Activated CD4-positive, alpha-beta T cell treated with anti-CD3 and anti-CD28 coated beads for 36 hours (primary cell): ENCODE measurements at regions of chr2 and their contacts with region 1.

Region 1: DNA sequence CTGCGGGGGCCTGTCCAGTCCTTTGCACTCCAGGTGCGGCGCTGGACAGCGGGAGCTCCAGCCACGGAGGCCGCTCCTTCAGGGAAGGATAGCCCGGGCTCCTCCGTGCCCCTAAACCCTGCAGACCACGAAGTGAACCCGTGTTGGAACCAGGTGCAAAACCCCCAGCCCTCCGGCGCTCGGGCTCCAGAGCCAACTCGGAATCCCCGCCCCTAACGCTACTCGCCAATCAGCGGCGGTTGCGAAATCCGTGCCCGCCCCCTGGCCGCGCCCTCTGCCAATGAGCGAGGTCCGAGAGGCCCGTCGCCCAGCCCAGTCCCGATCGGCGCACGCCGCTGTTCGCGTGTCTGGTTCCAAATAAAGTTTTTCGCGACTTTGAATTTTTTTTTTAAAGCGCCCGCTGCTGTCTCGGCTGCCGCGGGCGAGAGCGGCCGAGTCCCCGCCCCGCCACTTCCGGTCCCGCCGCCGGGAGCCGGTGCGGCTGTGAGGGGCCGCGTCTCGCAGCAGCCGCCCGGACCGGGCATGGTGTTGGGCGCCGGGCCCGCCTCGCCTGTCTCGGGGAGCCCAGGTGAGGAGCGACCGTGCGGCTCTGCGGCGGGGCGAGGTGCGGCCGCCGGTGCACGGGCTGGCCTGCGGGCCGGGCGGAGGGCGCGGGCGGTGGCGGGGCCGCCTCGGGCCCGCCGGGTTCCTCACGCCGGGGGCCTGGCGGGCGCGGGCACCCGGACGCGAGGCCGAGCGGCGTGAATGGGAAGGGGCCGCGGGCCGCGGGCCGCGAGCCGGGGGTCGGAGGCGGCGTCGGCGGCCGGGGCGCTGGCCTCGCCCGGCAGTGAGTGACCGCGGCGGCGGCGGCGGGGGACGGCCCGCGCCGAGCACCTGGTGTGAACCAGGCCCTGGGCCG is at the start of gene UBE2F:
- DNase-seq: peak; percentile 98
- ATAC-seq: peak; percentile 95
- H3K4me3 Mint-ChIP-seq: peak within 1 kb of the TSS; percentile 78
- H3K27ac Mint-ChIP-seq: peak within 1 kb of the TSS; percentile 88
- H3K4me1 Mint-ChIP-seq: peaks cover 38% of the 10 kb centered on the region
- H3K27me3 Mint-ChIP-seq: no peaks in the 10 kb centered on the region
- total RNA-seq, gene UBE2F: 59.2 to 75.5 TPM

Region 2: DNA sequence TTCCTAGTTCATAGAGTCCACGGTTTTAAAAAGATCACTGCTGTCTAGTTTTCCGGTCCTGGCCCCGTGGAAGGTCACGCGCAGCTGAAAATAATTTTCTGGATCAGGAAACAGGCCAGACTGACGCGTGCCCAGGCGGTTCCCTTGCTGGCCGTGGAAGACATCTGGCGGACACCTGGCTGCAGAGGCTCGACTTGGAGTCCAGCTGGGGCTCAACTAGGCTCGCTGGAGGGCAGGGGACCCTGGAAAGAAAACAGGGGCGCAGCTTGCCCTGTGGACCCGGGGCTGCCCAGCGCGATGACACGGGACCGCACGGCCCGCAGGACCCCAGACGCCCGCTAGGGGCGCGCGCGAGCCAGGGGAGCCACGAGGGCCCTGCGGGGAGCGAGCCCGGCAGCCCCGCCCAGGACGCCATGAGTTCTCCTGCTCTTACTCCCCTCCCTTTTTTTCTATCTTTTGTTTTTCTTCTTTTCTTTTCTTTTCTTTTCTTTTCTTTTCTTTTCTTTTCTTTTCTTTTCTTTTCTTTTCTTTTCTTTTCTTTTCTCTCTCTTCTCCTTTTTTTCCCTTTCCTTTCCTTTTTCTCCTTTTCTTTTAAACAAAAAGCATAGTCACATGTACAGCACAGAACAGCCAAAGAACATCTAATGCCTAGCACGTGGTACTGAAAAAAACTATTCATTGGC is 43.2 kb before region 1 on chr2:
- CTCF ChIA-PET with region 1: interaction called, 4 read pairs
- POLR2A ChIA-PET with region 1: no interaction called
- intact Hi-C with region 1: loop called in 1 of 2 experiments (anchors 2 kb)
- DNase-seq: peak; percentile 89
- ATAC-seq: peak; percentile 98
- H3K4me3 Mint-ChIP-seq: no peak overlapping the region
- H3K27ac Mint-ChIP-seq: no peak overlapping the region
- H3K4me1 Mint-ChIP-seq: peaks cover 20% of the 10 kb centered on the region
- H3K27me3 Mint-ChIP-seq: no peaks in the 10 kb centered on the region

Region 3: DNA sequence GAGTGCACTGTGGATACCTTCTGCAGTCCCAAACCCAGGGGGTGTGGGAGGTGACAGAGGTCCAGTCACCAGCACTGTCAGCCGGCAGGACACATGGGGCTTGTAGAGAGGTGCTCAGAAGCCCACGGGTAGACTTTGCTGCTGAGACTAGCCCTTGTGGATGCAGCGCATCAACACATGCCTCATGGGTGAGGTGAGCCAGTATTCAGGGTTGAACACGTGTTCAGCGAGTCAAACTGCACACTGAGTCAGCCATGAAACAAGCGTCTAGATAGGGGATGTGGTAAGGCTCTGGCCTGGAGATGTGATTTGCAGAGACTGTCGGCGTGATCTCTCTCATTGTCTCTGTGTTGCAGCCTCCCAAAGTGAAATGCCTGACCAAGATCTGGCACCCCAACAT is 58.2 kb after region 1 on chr2:
- CTCF ChIA-PET with region 1: no interaction called
- POLR2A ChIA-PET with region 1: no interaction called
- intact Hi-C with region 1: loop called in 1 of 2 experiments (anchors 2 kb)
- DNase-seq: peak; percentile 77
- ATAC-seq: peak; percentile 100
- H3K4me3 Mint-ChIP-seq: peak overlapping the region; percentile 32
- H3K27ac Mint-ChIP-seq: peak overlapping the region; percentile 84
- H3K4me1 Mint-ChIP-seq: peaks cover 20% of the 10 kb centered on the region
- H3K27me3 Mint-ChIP-seq: no peaks in the 10 kb centered on the region

Region 4: GRCh38 chr2:238231251-238231793 is 264.5 kb after region 1 on chr2:
- CTCF ChIA-PET with region 1: no interaction called
- POLR2A ChIA-PET with region 1: no interaction called
- intact Hi-C with region 1: loop called in 1 of 2 experiments (anchors 1 kb)
- DNase-seq: peak; percentile 89
- ATAC-seq: peak; percentile 90
- H3K4me3 Mint-ChIP-seq: peak overlapping the region; percentile 74
- H3K27ac Mint-ChIP-seq: peak overlapping the region; percentile 62
- H3K4me1 Mint-ChIP-seq: peaks cover 23% of the 10 kb centered on the region
- H3K27me3 Mint-ChIP-seq: peaks cover 14% of the 10 kb centered on the region